Ascending aorta (tissue), 2 donors: ENCODE measurements at regions of chr21 and their contacts with region 1.

Region 1: DNA sequence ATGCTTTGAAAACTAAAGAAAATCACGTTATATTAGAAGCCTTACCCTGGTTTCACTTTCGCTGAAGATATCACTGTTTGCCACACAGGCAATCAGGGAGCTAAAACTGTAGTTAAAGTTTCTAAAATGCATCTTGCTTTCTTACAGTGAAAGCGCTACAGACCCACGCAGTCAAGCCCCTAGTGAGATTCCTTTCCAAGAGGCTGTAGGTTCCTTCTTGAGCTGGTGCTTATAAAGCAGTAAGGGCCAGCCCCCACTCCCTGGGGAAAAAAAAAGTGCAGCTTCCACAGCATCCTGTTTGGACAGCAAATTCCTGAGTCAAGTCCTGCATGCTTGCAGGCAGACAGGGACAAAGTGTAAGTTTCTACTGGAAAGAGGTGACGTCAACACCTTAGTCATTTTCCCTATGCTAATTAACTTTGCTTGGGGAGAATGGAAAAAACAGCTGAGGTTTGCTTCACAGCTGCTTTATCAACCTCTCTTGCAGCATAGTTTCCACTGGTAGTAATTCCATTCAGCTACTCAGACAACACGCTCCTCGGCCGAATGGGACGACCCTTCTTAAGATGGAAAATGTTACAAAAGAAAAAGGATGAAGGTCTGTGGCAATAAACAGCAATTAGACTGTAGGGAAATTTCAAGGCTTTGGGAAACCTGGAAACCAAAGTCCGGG is 14.7 kb upstream of the KCNE1 start:
- DNase-seq: peak; percentile 34 to 96
- H3K4me3 ChIP-seq: peak overlapping the region; percentile 54 to 67
- H3K27ac ChIP-seq: peak overlapping the region; percentile 87 to 96
- H3K4me1 ChIP-seq: peaks cover 4 to 36% of the 10 kb centered on the region in 2 donors
- H3K27me3 ChIP-seq: no peaks in the 10 kb centered on the region
- CTCF ChIP-seq: no peak

Region 2: GRCh38 chr21:34252751-34253150 is 274.0 kb before region 1 on chr21:
- intact Hi-C with region 1: no loop called
- DNase-seq: no peak
- H3K4me3 ChIP-seq: no peak overlapping the region
- H3K27ac ChIP-seq: no peak overlapping the region
- H3K4me1 ChIP-seq: no peaks in the 10 kb centered on the region
- H3K27me3 ChIP-seq: no peaks in the 10 kb centered on the region
- CTCF ChIP-seq: no peak

Region 3: GRCh38 chr21:34510148-34511142 is 16.3 kb before region 1 on chr21:
- intact Hi-C with region 1: no loop called
- DNase-seq: peak; percentile 39 to 84
- H3K4me3 ChIP-seq: peak overlapping the region in 1 of 2 donors; percentile 22
- H3K27ac ChIP-seq: no peak overlapping the region
- H3K4me1 ChIP-seq: no peaks in the 10 kb centered on the region
- H3K27me3 ChIP-seq: no peaks in the 10 kb centered on the region
- CTCF ChIP-seq: peak; percentile 71 to 82 (median 74)

Region 4: GRCh38 chr21:34545079-34545884 is 18.5 kb after region 1 on chr21:
- intact Hi-C with region 1: loop called (anchors 1 kb)
- DNase-seq: peak in 1 of 2 donors; percentile 76
- H3K4me3 ChIP-seq: peak overlapping the region in 1 of 2 donors; percentile 0
- H3K27ac ChIP-seq: peak overlapping the region; percentile 53 to 63
- H3K4me1 ChIP-seq: peaks cover 9 to 20% of the 10 kb centered on the region in 2 donors
- H3K27me3 ChIP-seq: no peaks in the 10 kb centered on the region
- CTCF ChIP-seq: no peak

Region 5: GRCh38 chr21:34553151-34553952 is 26.6 kb after region 1 on chr21:
- intact Hi-C with region 1: loop called (anchors 2 kb)
- DNase-seq: no peak
- H3K4me3 ChIP-seq: peak overlapping the region in 1 of 2 donors; percentile 14
- H3K27ac ChIP-seq: peak overlapping the region; percentile 29 to 58
- H3K4me1 ChIP-seq: peaks cover 0 to 14% of the 10 kb centered on the region in 2 donors
- H3K27me3 ChIP-seq: no peaks in the 10 kb centered on the region
- CTCF ChIP-seq: no peak

Region 6: GRCh38 chr21:34580181-34580700 is 53.5 kb after region 1 on chr21:
- intact Hi-C with region 1: loop called (anchors 1 kb)
- DNase-seq: peak; percentile 17 to 91
- H3K4me3 ChIP-seq: no peak overlapping the region
- H3K27ac ChIP-seq: peak overlapping the region; percentile 57 to 77
- H3K4me1 ChIP-seq: peaks cover 0 to 28% of the 10 kb centered on the region in 2 donors
- H3K27me3 ChIP-seq: no peaks in the 10 kb centered on the region
- CTCF ChIP-seq: no peak

Region 7: GRCh38 chr21:34603002-34603709 is 76.4 kb after region 1 on chr21:
- intact Hi-C with region 1: loop called (anchors 5 kb)
- DNase-seq: peak; percentile 49 to 91
- H3K4me3 ChIP-seq: no peak overlapping the region
- H3K27ac ChIP-seq: no peak overlapping the region
- H3K4me1 ChIP-seq: peaks cover 0 to 5% of the 10 kb centered on the region in 2 donors
- H3K27me3 ChIP-seq: no peaks in the 10 kb centered on the region
- CTCF ChIP-seq: peak; percentile 67 to 85 (median 78)

Region 8: GRCh38 chr21:34614633-34615486 is 88.1 kb after region 1 on chr21 and contains the start of gene RCAN1:
- intact Hi-C with region 1: loop called (anchors 2 kb)
- DNase-seq: peak; percentile 69 to 94
- H3K4me3 ChIP-seq: peak within 1 kb of the TSS; percentile 74 to 81
- H3K27ac ChIP-seq: peak within 1 kb of the TSS; percentile 90 to 93
- H3K4me1 ChIP-seq: peaks cover 0 to 2% of the 10 kb centered on the region in 2 donors
- H3K27me3 ChIP-seq: no peaks in the 10 kb centered on the region
- CTCF ChIP-seq: no peak
- total RNA-seq, gene RCAN1: 12.5 TPM